PC-3 (cell line): ENCODE measurements at regions of chr9 and their contacts with region 1.

Region 1: GRCh38 chr9:128127990-128128835 is 684 bp upstream of the PTGES2 start:
- DNase-seq: peak; percentile 82
- ATAC-seq: peak; percentile 71
- H3K4me3 ChIP-seq: peak overlapping the region; percentile 95
- H3K27ac ChIP-seq: peak overlapping the region; percentile 87
- H3K4me1 ChIP-seq: peaks cover 10% of the 10 kb centered on the region; the same call in 1 of the 2 replicates
- H3K27me3 ChIP-seq: no peaks in the 10 kb centered on the region
- CTCF ChIP-seq: no peak

Region 2: GRCh38 chr9:128072144-128073021 is 55.8 kb before region 1 on chr9:
- CTCF ChIA-PET with region 1: no interaction called
- POLR2A ChIA-PET with region 1: no interaction called
- intact Hi-C with region 1: no loop called
- DNase-seq: peak; percentile 84
- ATAC-seq: no peak
- H3K4me3 ChIP-seq: peak overlapping the region; percentile 10; the same call in 1 of the 2 replicates
- H3K27ac ChIP-seq: peak overlapping the region; percentile 67
- H3K4me1 ChIP-seq: peaks cover 23% of the 10 kb centered on the region
- H3K27me3 ChIP-seq: no peaks in the 10 kb centered on the region
- CTCF ChIP-seq: no peak

Region 3: GRCh38 chr9:128159784-128160602 is 31.8 kb after region 1 on chr9 and contains the start of gene BBLN:
- CTCF ChIA-PET with region 1: no interaction called
- POLR2A ChIA-PET with region 1: interaction called, 4 read pairs
- intact Hi-C with region 1: loop called (anchors 5 kb)
- DNase-seq: peak; percentile 90
- ATAC-seq: peak; percentile 77
- H3K4me3 ChIP-seq: peak within 1 kb of the TSS; percentile 77
- H3K27ac ChIP-seq: peak within 1 kb of the TSS; percentile 63
- H3K4me1 ChIP-seq: peaks cover 19% of the 10 kb centered on the region
- H3K27me3 ChIP-seq: no peaks in the 10 kb centered on the region
- CTCF ChIP-seq: no peak
- total RNA-seq, gene BBLN: 158 and 171 TPM in 2 replicates